Endothelial cell of umbilical vein (primary cell): ENCODE measurements at regions of chr12 and their contacts with region 1.

Region 1: DNA sequence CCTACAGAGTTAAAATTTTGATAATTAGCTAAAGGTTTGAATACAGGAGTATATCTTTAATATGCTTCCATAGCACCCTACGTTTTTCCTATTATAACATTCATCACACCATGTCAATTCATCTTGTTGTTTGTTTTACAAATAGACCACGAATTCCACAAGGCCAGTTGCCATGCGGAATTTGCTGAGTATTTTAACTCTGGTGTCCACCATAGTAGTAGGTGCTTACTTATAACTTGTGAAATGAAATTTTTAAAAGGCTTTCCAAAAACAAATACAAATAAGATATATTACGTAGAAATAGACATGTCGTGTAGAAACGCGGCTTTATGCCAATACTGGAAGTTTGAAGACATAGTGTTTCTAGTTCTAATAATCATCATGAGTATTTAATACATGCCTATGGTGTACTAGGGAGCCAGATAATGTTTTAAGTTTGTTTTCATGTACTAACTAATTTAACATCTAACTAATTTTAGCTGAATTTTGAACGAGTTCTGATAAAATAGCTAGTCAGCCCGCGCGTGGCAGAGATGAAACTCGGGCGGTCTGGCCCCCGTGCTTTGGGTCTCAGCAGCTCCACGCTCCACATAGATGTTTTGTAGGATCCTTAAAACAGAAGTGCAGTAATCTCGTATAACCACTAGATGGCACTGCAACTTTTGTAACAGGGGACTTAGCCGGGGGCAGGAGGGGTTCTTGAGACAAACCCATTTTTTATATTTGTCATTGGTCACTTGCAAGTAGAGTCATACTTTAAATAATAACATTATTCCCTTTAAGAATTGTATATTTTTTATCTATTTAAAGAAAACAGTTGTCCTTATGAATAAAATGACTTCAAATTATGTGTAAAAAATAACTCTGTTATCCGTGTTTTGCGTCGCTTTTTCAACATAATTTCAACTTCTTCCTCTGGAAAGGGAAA is 10.2 kb downstream of the CD69 start:
- DNase-seq: peak; percentile 82
- H3K4me3 ChIP-seq: peak overlapping the region in 1 of 3 experiments; percentile 39
- H3K27ac ChIP-seq: peak overlapping the region; percentile 35
- H3K4me1 ChIP-seq: peaks cover 18% of the 10 kb centered on the region
- H3K27me3 ChIP-seq: no peaks in the 10 kb centered on the region
- CTCF ChIP-seq: peak; percentile 72 to 73
- POLR2A ChIP-seq: no peak

Region 2: DNA sequence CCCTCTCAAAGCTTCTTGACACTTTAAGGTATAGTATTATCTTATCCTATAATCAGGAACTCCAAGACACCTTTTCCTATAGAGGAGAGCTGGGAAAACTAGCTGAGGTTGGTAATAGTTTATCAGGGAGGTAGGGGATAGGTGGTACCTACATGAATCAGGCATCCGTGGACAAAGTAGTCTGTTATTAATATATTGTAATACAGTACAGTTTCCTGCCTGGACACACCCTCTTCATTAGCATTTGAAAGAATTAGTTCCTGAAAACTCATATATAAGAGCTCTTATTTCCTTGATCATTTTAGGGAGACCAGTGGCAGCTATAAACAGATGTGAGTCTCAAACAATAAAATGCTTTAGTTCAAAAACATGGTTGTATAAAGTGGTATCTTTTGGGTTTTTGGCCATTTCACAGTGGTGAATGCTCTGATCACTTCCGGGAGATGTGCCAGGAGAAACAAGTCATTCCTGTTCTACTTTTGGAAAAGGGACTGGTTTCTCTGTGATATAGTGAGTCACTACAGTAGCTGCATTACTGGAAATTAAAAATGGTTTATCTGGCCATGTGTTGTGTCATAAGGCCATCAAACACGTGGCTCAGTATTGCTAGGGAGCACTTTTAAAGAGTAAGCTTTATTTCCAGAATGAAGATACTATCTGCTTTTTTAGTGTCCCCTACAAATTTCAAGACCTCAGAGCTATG is 240.9 kb before region 1 on chr12:
- CTCF ChIA-PET with region 1: no interaction called
- POLR2A ChIA-PET with region 1: no interaction called
- dilution Hi-C with region 1: no loop called
- intact Hi-C with region 1: no loop called
- DNase-seq: no peak
- H3K4me3 ChIP-seq: no peak overlapping the region
- H3K27ac ChIP-seq: no peak overlapping the region
- H3K4me1 ChIP-seq: peaks cover 5% of the 10 kb centered on the region
- H3K27me3 ChIP-seq: no peaks in the 10 kb centered on the region
- CTCF ChIP-seq: no peak
- POLR2A ChIP-seq: no peak

Region 3: DNA sequence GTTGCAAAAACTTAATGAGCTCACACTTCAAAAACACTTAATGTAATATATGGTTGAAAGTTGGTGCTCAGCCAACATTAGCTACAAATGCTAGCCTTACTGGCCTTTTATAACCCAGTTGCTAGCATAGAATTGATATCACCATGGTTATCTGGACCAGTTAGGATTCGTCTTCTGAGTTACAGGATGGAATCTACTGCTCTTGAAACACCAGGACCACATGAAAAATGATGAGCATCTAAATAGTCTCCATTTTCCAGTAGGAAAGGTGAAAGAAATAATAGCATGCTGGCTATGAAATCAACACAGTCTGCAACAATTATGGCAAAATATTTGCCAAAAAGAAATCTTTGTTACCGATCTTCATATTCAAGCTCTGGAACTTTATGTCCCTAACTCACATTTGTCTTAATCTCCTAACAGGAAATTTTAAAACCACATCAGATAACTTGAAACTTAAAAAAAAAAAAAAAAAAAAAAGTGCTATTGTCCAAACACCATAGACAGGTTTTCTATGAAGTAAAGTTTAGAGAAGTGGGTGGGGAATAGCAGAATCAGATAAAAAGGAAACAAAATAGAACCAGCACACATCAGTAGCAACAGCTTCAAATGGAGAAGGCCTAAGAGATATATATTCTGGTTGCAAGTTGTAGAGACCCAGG is 22.8 kb after region 1 on chr12:
- CTCF ChIA-PET with region 1: interaction called, 15 read pairs
- POLR2A ChIA-PET with region 1: no interaction called
- dilution Hi-C with region 1: no loop called
- intact Hi-C with region 1: no loop called
- DNase-seq: no peak
- H3K4me3 ChIP-seq: no peak overlapping the region
- H3K27ac ChIP-seq: no peak overlapping the region
- H3K4me1 ChIP-seq: peaks cover 10% of the 10 kb centered on the region
- H3K27me3 ChIP-seq: no peaks in the 10 kb centered on the region
- CTCF ChIP-seq: no peak
- POLR2A ChIP-seq: no peak

Region 4: DNA sequence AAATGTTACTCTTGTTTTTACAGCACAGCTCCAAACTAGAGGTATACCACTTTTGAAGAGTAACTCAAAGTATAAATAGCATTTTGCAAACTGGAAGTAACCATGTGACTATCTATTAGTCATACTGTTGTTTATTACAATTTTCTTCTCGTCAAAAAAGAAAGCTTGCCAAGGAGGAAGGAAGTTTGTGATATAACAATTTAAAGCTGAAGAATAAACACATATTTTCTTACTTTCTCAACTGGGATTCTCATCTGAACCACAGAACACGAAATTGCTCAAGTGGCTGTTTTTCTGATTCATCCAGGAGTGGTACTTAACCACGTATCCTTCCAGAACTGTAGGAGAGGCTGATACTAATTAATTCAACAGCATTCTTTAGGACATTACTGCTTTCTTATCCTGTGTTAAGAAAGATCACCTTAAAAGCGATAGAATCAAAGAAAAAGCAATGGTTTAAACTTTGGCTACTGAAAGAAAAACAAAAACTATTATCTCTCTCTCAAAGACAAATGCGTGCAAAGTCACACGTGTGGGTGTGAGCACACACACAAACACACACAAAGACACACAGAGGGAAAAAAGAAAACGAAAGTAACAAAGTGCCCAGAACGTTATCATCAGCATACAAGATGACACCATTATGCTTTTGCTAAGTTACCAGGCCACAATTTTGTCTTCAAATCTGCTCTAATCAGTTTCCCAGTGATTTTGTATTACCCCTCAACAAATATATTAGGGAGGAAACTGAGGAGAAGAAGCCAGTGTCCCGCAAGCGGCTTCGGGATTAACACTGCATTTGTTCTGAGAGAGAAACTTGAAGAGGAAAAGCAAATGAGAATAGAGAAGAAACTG is 119.0 kb after region 1 on chr12 and contains the start of gene CLEC2B:
- CTCF ChIA-PET with region 1: interaction called, 21 read pairs
- POLR2A ChIA-PET with region 1: no interaction called
- dilution Hi-C with region 1: no loop called
- intact Hi-C with region 1: loop called (anchors 2 kb)
- DNase-seq: peak; percentile 92
- H3K4me3 ChIP-seq: peak within 1 kb of the TSS; percentile 28 to 93 (median 73)
- H3K27ac ChIP-seq: peak within 1 kb of the TSS; percentile 96
- H3K4me1 ChIP-seq: peaks cover 31% of the 10 kb centered on the region
- H3K27me3 ChIP-seq: no peaks in the 10 kb centered on the region
- CTCF ChIP-seq: no peak
- POLR2A ChIP-seq: peak; percentile 60
- total RNA-seq, gene CLEC2B: 16.4 and 18.3 TPM in 2 replicates

Region 5: GRCh38 chr12:10001171-10001776 is 250.7 kb after region 1 on chr12:
- CTCF ChIA-PET with region 1: interaction called, 10 read pairs
- POLR2A ChIA-PET with region 1: no interaction called
- dilution Hi-C with region 1: no loop called
- intact Hi-C with region 1: no loop called
- DNase-seq: no peak
- H3K4me3 ChIP-seq: no peak overlapping the region
- H3K27ac ChIP-seq: no peak overlapping the region
- H3K4me1 ChIP-seq: no peaks in the 10 kb centered on the region
- H3K27me3 ChIP-seq: no peaks in the 10 kb centered on the region
- CTCF ChIP-seq: no peak
- POLR2A ChIP-seq: no peak

Region 6: GRCh38 chr12:10069099-10069498 is 318.6 kb after region 1 on chr12:
- CTCF ChIA-PET with region 1: interaction called, 14 read pairs
- POLR2A ChIA-PET with region 1: no interaction called
- dilution Hi-C with region 1: no loop called
- intact Hi-C with region 1: no loop called
- DNase-seq: peak; percentile 94
- H3K4me3 ChIP-seq: no peak overlapping the region
- H3K27ac ChIP-seq: peak overlapping the region; percentile 98
- H3K4me1 ChIP-seq: peaks cover 44% of the 10 kb centered on the region
- H3K27me3 ChIP-seq: no peaks in the 10 kb centered on the region
- CTCF ChIP-seq: no peak
- POLR2A ChIP-seq: peak; percentile 25